MCF 10A (cell line): ENCODE measurements at regions of chr12 and their contacts with region 1.

Region 1: GRCh38 chr12:70849265-70849960 is 71.1 kb downstream of the PTPRR start:
- DNase-seq: peak; percentile 60
- H3K4me3 Mint-ChIP-seq: no peak overlapping the region
- H3K27ac Mint-ChIP-seq: peak overlapping the region; percentile 82
- H3K4me1 Mint-ChIP-seq: peaks cover 35% of the 10 kb centered on the region
- H3K27me3 Mint-ChIP-seq: no peaks in the 10 kb centered on the region
- CTCF ChIP-seq: peak; percentile 30

Region 2: GRCh38 chr12:70837026-70837425 is 12.4 kb before region 1 on chr12:
- CTCF ChIA-PET with region 1: interaction called, 15 read pairs
- POLR2A ChIA-PET with region 1: no interaction called
- intact Hi-C with region 1: no loop called
- DNase-seq: no peak
- H3K4me3 Mint-ChIP-seq: no peak overlapping the region
- H3K27ac Mint-ChIP-seq: no peak overlapping the region
- H3K4me1 Mint-ChIP-seq: peaks cover 4% of the 10 kb centered on the region
- H3K27me3 Mint-ChIP-seq: no peaks in the 10 kb centered on the region
- CTCF ChIP-seq: no peak

Region 3: GRCh38 chr12:71014180-71014785 is 164.9 kb after region 1 on chr12:
- CTCF ChIA-PET with region 1: interaction called, 25 read pairs
- POLR2A ChIA-PET with region 1: interaction called, 6 read pairs
- intact Hi-C with region 1: loop called (anchors 1 kb)
- DNase-seq: peak; percentile 77
- H3K4me3 Mint-ChIP-seq: peak overlapping the region; percentile 46
- H3K27ac Mint-ChIP-seq: peak overlapping the region; percentile 68
- H3K4me1 Mint-ChIP-seq: peaks cover 11% of the 10 kb centered on the region
- H3K27me3 Mint-ChIP-seq: no peaks in the 10 kb centered on the region
- CTCF ChIP-seq: peak; percentile 81

Region 4: GRCh38 chr12:71019282-71019831 is 169.9 kb after region 1 on chr12:
- CTCF ChIA-PET with region 1: interaction called, 25 read pairs
- POLR2A ChIA-PET with region 1: interaction called, 6 read pairs
- intact Hi-C with region 1: loop called (anchors 1 kb)
- DNase-seq: no peak
- H3K4me3 Mint-ChIP-seq: no peak overlapping the region
- H3K27ac Mint-ChIP-seq: no peak overlapping the region
- H3K4me1 Mint-ChIP-seq: peaks cover 5% of the 10 kb centered on the region
- H3K27me3 Mint-ChIP-seq: no peaks in the 10 kb centered on the region
- CTCF ChIP-seq: no peak